CD8-positive, alpha-beta T cell (primary cell): ENCODE measurements at regions of chr3 and their contacts with region 1.

Region 1: GRCh38 chr3:151290673-151291072 is 12.3 kb upstream of the P2RY14 start:
- DNase-seq: no peak
- ATAC-seq: no peak
- H3K4me3 ChIP-seq: no peak overlapping the region
- H3K4me3 Mint-ChIP-seq: no peak overlapping the region
- H3K27ac ChIP-seq: no peak overlapping the region
- H3K27ac Mint-ChIP-seq: no peak overlapping the region
- H3K4me1 ChIP-seq: no peaks in the 10 kb centered on the region
- H3K4me1 Mint-ChIP-seq: no peaks in the 10 kb centered on the region
- H3K27me3 ChIP-seq: no peaks in the 10 kb centered on the region
- H3K27me3 Mint-ChIP-seq: no peaks in the 10 kb centered on the region
- CTCF ChIP-seq: no peak

Region 2: GRCh38 chr3:151412989-151413388 is 122.3 kb after region 1 on chr3:
- CTCF ChIA-PET with region 1: no interaction called
- POLR2A ChIA-PET with region 1: no interaction called
- intact Hi-C with region 1: no loop called
- DNase-seq: no peak
- ATAC-seq: no peak
- H3K4me3 ChIP-seq: no peak overlapping the region
- H3K4me3 Mint-ChIP-seq: no peak overlapping the region
- H3K27ac ChIP-seq: no peak overlapping the region
- H3K27ac Mint-ChIP-seq: no peak overlapping the region
- H3K4me1 ChIP-seq: no peaks in the 10 kb centered on the region
- H3K4me1 Mint-ChIP-seq: no peaks in the 10 kb centered on the region
- H3K27me3 ChIP-seq: no peaks in the 10 kb centered on the region
- H3K27me3 Mint-ChIP-seq: no peaks in the 10 kb centered on the region
- CTCF ChIP-seq: no peak

Region 3: DNA sequence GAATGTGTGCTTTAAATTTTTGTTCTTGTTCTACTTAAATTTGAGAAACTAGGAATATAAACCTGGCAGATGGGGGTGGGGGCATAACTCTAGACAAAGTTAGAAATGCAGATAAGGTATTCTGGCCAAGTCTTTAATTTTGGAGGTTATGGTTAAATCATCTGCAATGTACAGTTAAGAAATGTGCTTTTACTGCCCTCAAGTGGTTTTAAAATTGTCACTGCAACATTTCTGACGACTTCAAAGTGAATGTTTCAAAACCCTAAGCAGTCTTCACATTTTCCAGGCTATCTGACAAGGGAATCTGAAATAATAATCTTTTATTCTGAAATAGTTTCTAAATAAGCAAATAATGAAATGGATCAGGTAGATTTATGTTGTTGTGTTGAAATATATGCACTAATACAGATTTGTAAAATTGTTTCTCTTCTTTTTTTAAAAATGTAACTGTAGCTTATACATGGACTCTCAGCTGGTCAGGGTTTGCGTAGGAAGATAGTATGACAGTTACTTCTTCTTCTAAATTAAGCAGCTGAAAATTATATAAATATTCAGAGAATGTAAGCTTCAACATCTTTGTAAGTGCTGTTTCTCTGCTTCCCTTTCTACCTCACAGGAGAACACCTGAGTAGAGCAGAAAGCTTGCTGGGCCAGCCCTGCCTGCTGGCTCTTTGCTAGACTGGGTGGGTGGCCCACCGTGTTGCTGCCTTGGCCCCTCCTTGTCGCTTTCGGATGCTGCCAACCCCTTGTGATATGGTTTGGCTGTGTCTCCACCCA is 627.8 kb after region 1 on chr3:
- CTCF ChIA-PET with region 1: no interaction called
- POLR2A ChIA-PET with region 1: no interaction called
- intact Hi-C with region 1: loop called in 1 of 2 experiments (anchors 5 kb)
- DNase-seq: peak in 2 of 9 experiments; percentile 46 to 64
- ATAC-seq: no peak
- H3K4me3 ChIP-seq: no peak overlapping the region
- H3K4me3 Mint-ChIP-seq: no peak overlapping the region
- H3K27ac ChIP-seq: no peak overlapping the region
- H3K27ac Mint-ChIP-seq: no peak overlapping the region
- H3K4me1 ChIP-seq: no peaks in the 10 kb centered on the region
- H3K4me1 Mint-ChIP-seq: no peaks in the 10 kb centered on the region
- H3K27me3 ChIP-seq: no peaks in the 10 kb centered on the region
- H3K27me3 Mint-ChIP-seq: no peaks in the 10 kb centered on the region
- CTCF ChIP-seq: peak; percentile 63